PC-3 (cell line): ENCODE measurements at regions of chr7 and their contacts with region 1.

Region 1: GRCh38 chr7:67364431-67365017 is 367.9 kb downstream of the TYW1 start:
- DNase-seq: no peak
- ATAC-seq: no peak
- H3K4me3 ChIP-seq: no peak overlapping the region
- H3K27ac ChIP-seq: no peak overlapping the region
- H3K4me1 ChIP-seq: no peaks in the 10 kb centered on the region
- H3K27me3 ChIP-seq: no peaks in the 10 kb centered on the region
- CTCF ChIP-seq: no peak

Region 2: DNA sequence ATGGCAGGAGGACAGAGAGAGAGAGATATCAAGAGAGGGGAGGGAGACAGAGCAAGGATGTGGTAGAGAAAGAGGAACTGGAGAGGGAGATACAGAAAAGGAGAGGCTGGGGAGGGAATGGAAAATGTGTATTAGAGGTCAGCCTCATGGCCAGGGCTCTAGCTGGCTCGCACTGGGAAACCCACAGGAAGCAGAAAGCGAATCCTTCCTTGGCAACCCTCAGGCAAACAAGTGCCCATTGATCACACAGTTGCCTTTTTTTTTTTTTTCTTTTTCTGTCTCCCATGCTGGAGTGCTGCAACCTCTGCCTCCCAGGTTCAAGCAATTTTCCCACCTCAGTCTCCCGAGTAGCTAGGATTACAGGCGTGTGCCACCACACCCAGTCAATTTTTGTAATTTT is 23.3 kb after region 1 on chr7:
- CTCF ChIA-PET with region 1: interaction called, 10 read pairs
- POLR2A ChIA-PET with region 1: no interaction called
- intact Hi-C with region 1: no loop called
- DNase-seq: no peak
- ATAC-seq: no peak
- H3K4me3 ChIP-seq: no peak overlapping the region
- H3K27ac ChIP-seq: no peak overlapping the region
- H3K4me1 ChIP-seq: no peaks in the 10 kb centered on the region
- H3K27me3 ChIP-seq: no peaks in the 10 kb centered on the region
- CTCF ChIP-seq: no peak

Region 3: DNA sequence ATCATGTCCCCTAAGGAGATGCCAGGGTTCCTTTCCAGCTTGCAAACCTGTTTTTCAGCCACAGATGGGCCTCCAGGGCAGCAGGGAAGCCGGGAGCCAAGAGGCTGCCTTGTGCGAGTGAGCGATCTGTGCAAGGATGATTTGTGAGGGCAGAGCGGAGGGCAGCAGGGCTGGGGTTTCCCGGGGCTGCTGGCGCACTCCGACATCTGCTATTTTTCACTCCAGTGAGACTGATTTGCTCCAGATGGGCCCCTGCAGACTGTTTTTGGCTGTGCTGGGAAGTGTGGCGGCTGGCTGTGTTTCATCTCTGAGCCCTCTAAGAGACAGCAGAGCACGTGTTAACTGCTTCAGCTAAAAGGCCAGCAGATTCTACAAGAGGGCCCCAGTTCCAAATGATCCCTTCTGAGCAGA is 98.3 kb after region 1 on chr7:
- CTCF ChIA-PET with region 1: no interaction called
- POLR2A ChIA-PET with region 1: no interaction called
- intact Hi-C with region 1: no loop called
- DNase-seq: no peak
- ATAC-seq: no peak
- H3K4me3 ChIP-seq: no peak overlapping the region
- H3K27ac ChIP-seq: no peak overlapping the region
- H3K4me1 ChIP-seq: no peaks in the 10 kb centered on the region
- H3K27me3 ChIP-seq: no peaks in the 10 kb centered on the region
- CTCF ChIP-seq: no peak